K562 (cell line): ENCODE measurements at regions of chr10 and their contacts with region 1.

Region 1: DNA sequence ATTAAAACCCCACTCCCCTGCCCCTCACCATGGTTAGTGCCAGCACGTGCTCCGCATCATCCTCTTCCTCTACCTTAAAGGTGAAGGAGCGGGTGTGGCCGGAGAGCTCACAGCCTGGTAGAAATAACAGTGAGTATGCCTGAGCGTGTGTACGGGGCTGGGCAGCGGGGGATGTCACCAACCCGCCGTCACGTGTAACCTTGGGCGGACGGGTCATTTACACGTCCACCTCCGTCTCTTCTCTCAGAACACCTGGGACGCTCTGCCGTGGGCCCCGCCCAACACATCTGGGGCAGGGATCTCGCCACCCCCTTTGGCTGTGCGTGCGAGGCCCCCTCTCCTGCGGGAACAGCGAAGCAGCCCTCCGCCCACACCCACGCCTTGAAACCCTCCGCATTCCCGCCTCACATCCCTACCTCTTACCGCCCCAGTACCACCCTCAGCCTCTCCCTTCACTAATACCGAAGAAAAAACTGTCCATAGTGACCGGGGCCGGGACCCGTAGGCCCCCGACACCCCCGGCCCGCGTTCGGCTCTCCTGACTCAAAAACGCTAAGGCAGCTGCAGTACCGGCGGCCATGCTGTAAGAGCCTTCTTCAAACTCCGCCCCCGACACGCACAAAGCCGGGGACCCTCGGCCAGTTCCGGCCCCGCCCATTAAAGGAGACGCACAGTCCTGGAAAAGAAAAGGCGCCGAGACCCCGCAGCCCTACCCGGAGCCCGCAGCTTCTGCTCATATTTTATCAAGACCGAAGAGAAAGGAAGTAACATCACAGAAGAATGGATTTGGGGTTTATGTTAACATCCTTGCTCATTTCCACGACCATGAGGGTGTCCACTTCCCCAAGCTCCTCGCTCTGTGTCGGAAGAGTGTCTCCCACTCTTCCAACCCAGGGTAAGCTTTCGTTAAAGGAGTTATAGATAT is at the start of gene NPM3:
- DNase-seq: peak; percentile 82 to 89 (median 85)
- ATAC-seq: peak; percentile 93
- H3K4me3 ChIP-seq: peak within 1 kb of the TSS; percentile 73
- H3K27ac ChIP-seq: peak within 1 kb of the TSS; percentile 65
- H3K4me1 ChIP-seq: peaks cover 17 to 46% of the 10 kb centered on the region in 2 experiments
- H3K27me3 ChIP-seq: no peaks in the 10 kb centered on the region
- CTCF ChIP-seq: no peak
- EP300 ChIP-seq: no peak
- POLR2A ChIP-seq: peak; percentile 79
- RAD21 ChIP-seq: no peak
- polyA plus RNA-seq, gene NPM3: 15.2 to 54.4 TPM

Region 2: DNA sequence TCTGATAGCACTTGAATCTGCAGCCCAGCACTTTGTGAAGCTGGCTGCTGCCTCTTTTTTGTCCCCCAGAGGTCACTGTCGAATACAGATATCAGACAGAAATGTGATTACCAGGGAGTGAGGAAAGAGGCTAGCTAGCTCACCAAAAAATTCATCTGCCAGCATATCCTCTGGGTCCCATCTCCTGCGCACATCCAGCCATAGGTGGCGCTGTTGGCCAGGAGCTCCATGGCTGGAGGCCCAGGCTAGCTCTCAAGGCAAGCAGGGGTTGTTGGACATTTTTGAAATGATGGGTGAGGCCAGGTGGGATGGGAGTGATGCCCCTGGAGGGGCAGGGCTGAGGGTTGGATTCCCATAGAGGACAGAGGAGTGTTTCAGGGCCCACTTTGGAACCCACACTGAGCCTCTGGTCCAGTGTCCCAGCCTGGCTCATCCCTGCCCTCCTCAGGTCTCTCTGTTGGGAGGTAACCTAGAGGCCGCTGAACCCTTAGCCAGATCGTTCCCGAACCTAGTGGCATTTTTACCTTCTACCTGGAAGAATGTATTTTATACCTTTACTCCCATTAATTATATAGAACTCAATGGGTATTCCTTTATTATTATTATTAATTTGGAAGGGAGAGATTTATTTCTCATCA is 180.2 kb before region 1 on chr10:
- CTCF ChIA-PET with region 1: interaction called, 32 read pairs
- POLR2A ChIA-PET with region 1: interaction called, 14 read pairs
- in situ Hi-C with region 1: loop called (anchors 5 kb)
- intact Hi-C with region 1: loop called (anchors 1 kb)
- DNase-seq: peak; percentile 72 to 83 (median 76)
- ATAC-seq: peak; percentile 99
- H3K4me3 ChIP-seq: no peak overlapping the region
- H3K27ac ChIP-seq: no peak overlapping the region
- H3K4me1 ChIP-seq: peaks cover 7 to 9% of the 10 kb centered on the region in 2 experiments; a peak in 2 of 5 replicates
- H3K27me3 ChIP-seq: no peaks in the 10 kb centered on the region
- CTCF ChIP-seq: peak; percentile 91 to 97 (median 95)
- EP300 ChIP-seq: no peak
- POLR2A ChIP-seq: no peak
- RAD21 ChIP-seq: peak; percentile 81 to 88

Region 3: GRCh38 chr10:101609481-101609880 is 173.6 kb before region 1 on chr10:
- CTCF ChIA-PET with region 1: interaction called, 3 read pairs
- POLR2A ChIA-PET with region 1: no interaction called
- in situ Hi-C with region 1: loop called (anchors 5 kb)
- intact Hi-C with region 1: no loop called
- DNase-seq: no peak
- ATAC-seq: no peak
- H3K4me3 ChIP-seq: no peak overlapping the region
- H3K27ac ChIP-seq: no peak overlapping the region
- H3K4me1 ChIP-seq: peaks cover 7 to 9% of the 10 kb centered on the region in 2 experiments; a peak in 2 of 5 replicates
- H3K27me3 ChIP-seq: no peaks in the 10 kb centered on the region
- CTCF ChIP-seq: no peak
- EP300 ChIP-seq: no peak
- POLR2A ChIP-seq: no peak
- RAD21 ChIP-seq: no peak

Region 4: GRCh38 chr10:101797403-101798059 is 14.5 kb after region 1 on chr10:
- CTCF ChIA-PET with region 1: no interaction called
- POLR2A ChIA-PET with region 1: interaction called, 34 read pairs
- in situ Hi-C with region 1: no loop called
- intact Hi-C with region 1: no loop called
- DNase-seq: peak in 2 of 4 experiments; percentile 34 to 68
- ATAC-seq: peak; percentile 91
- H3K4me3 ChIP-seq: no peak overlapping the region
- H3K27ac ChIP-seq: 0 out of 3 replicates have a peak overlapping the region, but pooled peaks have one; percentile 27
- H3K4me1 ChIP-seq: peaks cover 0 to 9% of the 10 kb centered on the region in 2 experiments; a peak in 3 of 5 replicates
- H3K27me3 ChIP-seq: no peaks in the 10 kb centered on the region
- CTCF ChIP-seq: no peak
- EP300 ChIP-seq: peak; percentile 55
- POLR2A ChIP-seq: no peak
- RAD21 ChIP-seq: no peak

Region 5: GRCh38 chr10:102072673-102073527 is 289.8 kb after region 1 on chr10:
- CTCF ChIA-PET with region 1: no interaction called
- POLR2A ChIA-PET with region 1: no interaction called
- in situ Hi-C with region 1: no loop called
- intact Hi-C with region 1: loop called (anchors 5 kb)
- DNase-seq: peak; percentile 67 to 79 (median 69)
- ATAC-seq: peak; percentile 93
- H3K4me3 ChIP-seq: no peak overlapping the region
- H3K27ac ChIP-seq: no peak overlapping the region
- H3K4me1 ChIP-seq: peaks cover 3 to 11% of the 10 kb centered on the region in 2 experiments; a peak in 3 of 5 replicates
- H3K27me3 ChIP-seq: no peaks in the 10 kb centered on the region
- CTCF ChIP-seq: peak; percentile 82 to 91 (median 86)
- EP300 ChIP-seq: no peak
- POLR2A ChIP-seq: no peak
- RAD21 ChIP-seq: peak; percentile 89 to 94